ENCODE measurements at regions of chr2 and their contacts with region 1.

Region 1: GRCh38 chr2:196131384-196131937 is 39.9 kb downstream of the STK17B start:
- DNase-seq: peak; percentile 18
- H3K4me3 ChIP-seq: no peak overlapping the region
- H3K27ac ChIP-seq: no peak overlapping the region
- H3K4me1 ChIP-seq: no peaks in the 10 kb centered on the region
- H3K27me3 ChIP-seq: no peaks in the 10 kb centered on the region
- CTCF ChIP-seq: peak in 1 of 2 donors; percentile 19
- POLR2A ChIP-seq: no peak

Region 2: GRCh38 chr2:196277002-196277401 is 145.5 kb after region 1 on chr2:
- CTCF ChIA-PET with region 1: no interaction called
- POLR2A ChIA-PET with region 1: no interaction called
- dilution Hi-C with region 1: no loop called
- intact Hi-C with region 1: loop called (anchors 1 kb)
- DNase-seq: peak; percentile 46
- H3K4me3 ChIP-seq: peak overlapping the region in 2 of 3 experiments; percentile 38 to 60
- H3K27ac ChIP-seq: peak overlapping the region; percentile 14
- H3K4me1 ChIP-seq: peaks cover 58% of the 10 kb centered on the region
- H3K27me3 ChIP-seq: no peaks in the 10 kb centered on the region
- CTCF ChIP-seq: peak; percentile 32 to 41
- POLR2A ChIP-seq: no peak

Region 3: GRCh38 chr2:196607073-196607472 is 475.6 kb after region 1 on chr2:
- CTCF ChIA-PET with region 1: no interaction called
- POLR2A ChIA-PET with region 1: no interaction called
- dilution Hi-C with region 1: no loop called
- intact Hi-C with region 1: no loop called
- DNase-seq: peak; percentile 86
- H3K4me3 ChIP-seq: peak overlapping the region in 1 of 3 experiments; percentile 30
- H3K27ac ChIP-seq: peak overlapping the region; percentile 96
- H3K4me1 ChIP-seq: peaks cover 28% of the 10 kb centered on the region
- H3K27me3 ChIP-seq: no peaks in the 10 kb centered on the region
- CTCF ChIP-seq: no peak
- POLR2A ChIP-seq: no peak